SK-N-SH (cell line): ENCODE measurements at regions of chr2 and their contacts with region 1.

Region 1: GRCh38 chr2:25851740-25852503 is 26.4 kb downstream of the ASXL2 start:
- DNase-seq: peak; percentile 63
- H3K4me3 ChIP-seq: no peak overlapping the region
- H3K27ac ChIP-seq: peak overlapping the region in 1 of 2 experiments; percentile 33; a peak in 2 of 4 replicates
- H3K4me1 ChIP-seq: peaks cover 4 to 10% of the 10 kb centered on the region in 2 experiments; a peak in 3 of 4 replicates
- H3K27me3 ChIP-seq: no peaks in the 10 kb centered on the region
- CTCF ChIP-seq: peak; percentile 94
- EP300 ChIP-seq: no peak
- RAD21 ChIP-seq: peak; percentile 83

Region 2: GRCh38 chr2:25822190-25823117 is 29.5 kb before region 1 on chr2:
- CTCF ChIA-PET with region 1: interaction called, 18 read pairs
- POLR2A ChIA-PET with region 1: no interaction called
- DNase-seq: peak; percentile 54
- H3K4me3 ChIP-seq: no peak overlapping the region
- H3K27ac ChIP-seq: no peak overlapping the region
- H3K4me1 ChIP-seq: no peaks in the 10 kb centered on the region
- H3K27me3 ChIP-seq: no peaks in the 10 kb centered on the region
- CTCF ChIP-seq: no peak
- EP300 ChIP-seq: no peak
- RAD21 ChIP-seq: no peak

Region 3: DNA sequence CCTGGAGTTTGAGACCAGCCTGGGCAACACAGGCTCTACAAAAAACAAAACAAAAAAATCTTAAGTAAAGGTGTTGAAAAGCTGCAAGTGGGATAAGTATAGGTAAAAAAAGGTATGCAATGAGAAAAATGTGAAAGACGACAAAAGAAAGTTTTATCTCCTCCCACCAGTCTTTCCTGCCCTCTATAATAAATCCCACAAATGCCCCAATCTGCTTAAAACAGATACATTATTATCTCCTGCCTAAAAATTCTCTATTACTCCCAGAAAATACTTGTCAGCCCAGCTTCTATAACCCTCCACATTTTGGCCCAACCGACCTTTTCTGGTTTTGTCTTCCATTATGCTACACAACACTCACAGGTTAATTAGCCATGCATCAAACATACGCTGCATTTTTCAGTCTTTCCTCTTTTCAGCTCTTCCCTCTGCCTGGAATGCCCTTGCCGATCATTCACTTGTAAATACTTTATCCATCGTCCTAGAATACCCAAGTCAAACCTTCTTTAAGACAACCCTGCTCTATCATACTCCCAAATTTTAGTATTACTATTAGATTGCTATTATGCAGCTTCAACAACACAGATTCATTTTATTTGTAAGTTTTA is 15.6 kb after region 1 on chr2:
- CTCF ChIA-PET with region 1: interaction called, 75 read pairs
- POLR2A ChIA-PET with region 1: no interaction called
- DNase-seq: no peak
- H3K4me3 ChIP-seq: no peak overlapping the region
- H3K27ac ChIP-seq: no peak overlapping the region
- H3K4me1 ChIP-seq: no peaks in the 10 kb centered on the region
- H3K27me3 ChIP-seq: no peaks in the 10 kb centered on the region
- CTCF ChIP-seq: no peak
- EP300 ChIP-seq: no peak
- RAD21 ChIP-seq: no peak

Region 4: GRCh38 chr2:25891672-25892071 is 39.8 kb after region 1 on chr2:
- CTCF ChIA-PET with region 1: interaction called, 10 read pairs
- POLR2A ChIA-PET with region 1: no interaction called
- DNase-seq: no peak
- H3K4me3 ChIP-seq: no peak overlapping the region
- H3K27ac ChIP-seq: no peak overlapping the region
- H3K4me1 ChIP-seq: peaks cover 0 to 4% of the 10 kb centered on the region in 2 experiments; a peak in 1 of 4 replicates
- H3K27me3 ChIP-seq: no peaks in the 10 kb centered on the region
- CTCF ChIP-seq: no peak
- EP300 ChIP-seq: no peak
- RAD21 ChIP-seq: no peak

Region 5: DNA sequence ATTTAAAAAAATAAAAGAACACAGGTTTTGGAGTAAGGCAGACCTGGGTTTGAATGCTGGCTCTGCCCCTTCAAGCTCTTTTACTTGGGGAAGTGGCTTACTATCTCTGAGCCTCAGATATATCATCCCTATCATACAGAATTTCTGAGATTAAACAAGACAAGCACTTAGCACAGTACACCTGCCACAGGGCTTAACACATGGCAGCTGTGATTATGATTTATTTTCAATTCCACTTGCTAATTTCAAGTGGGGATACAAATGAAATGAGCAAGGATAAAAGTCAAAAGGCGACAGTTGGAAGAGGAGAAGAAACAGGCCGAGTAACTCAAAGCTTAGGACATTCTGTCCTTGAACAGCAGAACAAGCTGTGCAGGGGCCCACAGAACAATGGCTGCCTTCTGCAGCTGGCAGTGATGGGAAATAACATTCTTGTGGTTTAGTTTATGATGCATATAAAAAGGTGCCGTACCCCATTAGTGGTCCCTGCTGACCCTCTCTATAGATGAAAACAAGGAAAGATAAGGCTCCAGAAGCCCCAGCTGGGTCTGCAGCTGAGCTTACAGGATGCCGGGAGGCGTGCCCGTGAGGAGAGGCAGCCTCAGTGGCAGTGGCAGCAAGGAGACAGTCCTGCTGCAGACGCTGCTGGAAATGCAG is 85.1 kb after region 1 on chr2:
- CTCF ChIA-PET with region 1: interaction called, 13 read pairs
- POLR2A ChIA-PET with region 1: no interaction called
- DNase-seq: peak; percentile 56
- H3K4me3 ChIP-seq: no peak overlapping the region
- H3K27ac ChIP-seq: peak overlapping the region in 1 of 2 experiments; percentile 31; a peak in 2 of 4 replicates
- H3K4me1 ChIP-seq: peaks cover 0 to 6% of the 10 kb centered on the region in 2 experiments; a peak in 1 of 4 replicates
- H3K27me3 ChIP-seq: no peaks in the 10 kb centered on the region
- CTCF ChIP-seq: no peak
- EP300 ChIP-seq: peak in 1 of 2 experiments; percentile 62; a peak in 2 of 4 replicates
- RAD21 ChIP-seq: no peak